IMR-90 (cell line): ENCODE measurements at regions of chr12 and their contacts with region 1.

Region 1: DNA sequence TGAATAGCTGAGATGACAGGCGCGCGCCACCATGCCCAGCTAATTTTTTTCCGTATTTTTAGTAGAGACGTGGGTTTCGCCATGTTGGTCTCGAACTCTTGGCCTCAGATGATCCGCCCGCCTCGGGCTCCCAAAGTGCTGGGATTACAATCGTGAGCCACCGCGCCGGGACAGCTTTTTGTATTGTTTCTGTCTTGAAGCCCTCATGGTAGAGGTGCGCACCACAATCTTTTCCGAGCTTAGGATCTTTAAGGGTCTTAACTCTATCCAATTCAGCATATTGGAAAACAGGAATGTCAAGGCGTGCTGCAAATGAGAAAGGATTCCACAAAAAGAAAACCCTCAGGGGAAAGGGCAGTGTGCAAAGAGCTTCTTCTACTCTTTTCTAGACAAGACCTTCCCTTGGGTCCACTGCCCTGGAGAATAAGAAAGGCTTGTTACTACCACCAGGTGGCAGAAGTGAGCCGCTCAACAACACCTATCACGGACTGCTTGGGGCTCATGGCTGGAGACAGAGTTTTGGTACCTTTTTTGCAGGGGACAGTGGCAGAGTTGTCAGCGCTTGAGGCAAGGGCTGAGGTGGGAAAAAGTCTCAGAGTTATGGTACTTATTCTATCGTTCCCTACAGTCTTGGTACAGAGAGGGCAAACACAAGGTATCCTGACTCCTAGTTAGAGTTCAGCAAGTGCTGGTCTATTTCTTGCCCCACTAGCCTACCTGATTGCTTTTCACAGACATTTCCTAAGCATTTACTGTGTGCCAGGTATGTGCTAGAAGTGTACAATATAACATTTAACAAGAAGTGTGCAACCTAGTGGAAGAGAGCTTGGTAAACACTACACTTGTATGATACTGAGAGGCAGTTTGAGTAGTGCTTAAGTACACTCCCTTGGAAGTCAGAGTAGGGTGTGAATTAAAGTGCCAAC is 16.4 kb upstream of the SP7 start:
- DNase-seq: peak; percentile 83
- ATAC-seq: peak; percentile 99
- H3K4me3 ChIP-seq: no peak overlapping the region
- H3K27ac ChIP-seq: no peak overlapping the region
- H3K4me1 ChIP-seq: no peaks in the 10 kb centered on the region
- H3K27me3 ChIP-seq: no peaks in the 10 kb centered on the region
- CTCF ChIP-seq: peak; percentile 96
- POLR2A ChIP-seq: no peak
- RAD21 ChIP-seq: peak; percentile 94

Region 2: GRCh38 chr12:53190108-53190729 is 162.4 kb before region 1 on chr12:
- CTCF ChIA-PET with region 1: no interaction called
- POLR2A ChIA-PET with region 1: no interaction called
- dilution Hi-C with region 1: no loop called
- in situ Hi-C with region 1: no loop called
- intact Hi-C with region 1: no loop called
- DNase-seq: peak; percentile 59
- ATAC-seq: peak; percentile 90
- H3K4me3 ChIP-seq: no peak overlapping the region
- H3K27ac ChIP-seq: no peak overlapping the region
- H3K4me1 ChIP-seq: no peaks in the 10 kb centered on the region; the same call in 1 of the 2 replicates
- H3K27me3 ChIP-seq: no peaks in the 10 kb centered on the region
- CTCF ChIP-seq: peak; percentile 70
- POLR2A ChIP-seq: no peak
- RAD21 ChIP-seq: peak; percentile 59

Region 3: DNA sequence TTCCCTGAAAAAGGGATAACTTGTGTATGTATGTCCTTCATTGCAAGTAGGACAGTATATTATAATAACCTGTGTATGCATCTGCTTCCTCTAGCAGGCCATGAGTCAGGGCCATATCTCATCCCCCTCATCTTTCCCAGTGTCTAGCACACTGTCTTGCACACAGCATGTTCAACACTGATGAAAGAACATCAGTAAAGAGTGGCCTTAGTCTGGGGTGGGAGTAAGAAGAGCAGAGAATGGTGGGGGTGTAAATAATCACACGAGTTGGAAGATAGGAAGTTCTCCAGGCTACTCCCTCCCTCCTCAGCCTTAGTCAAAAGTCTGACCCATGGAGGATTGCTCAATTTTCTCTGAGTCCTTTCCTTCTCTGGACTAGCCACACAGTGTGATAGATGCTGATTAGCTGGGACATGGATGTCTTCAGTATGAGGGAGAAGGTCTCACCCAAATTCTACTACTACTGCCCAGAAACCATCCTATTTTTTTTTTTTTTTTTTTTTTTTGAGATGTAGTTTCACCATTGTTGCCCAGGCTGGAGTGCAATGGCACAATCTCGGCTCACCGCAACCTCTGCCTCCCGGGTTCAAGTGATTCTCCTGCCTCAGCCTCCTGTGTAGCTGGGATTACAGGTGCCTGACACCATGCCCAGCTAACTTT is 12.8 kb after region 1 on chr12:
- CTCF ChIA-PET with region 1: interaction called, 10 read pairs
- POLR2A ChIA-PET with region 1: no interaction called
- dilution Hi-C with region 1: no loop called
- in situ Hi-C with region 1: no loop called
- intact Hi-C with region 1: no loop called
- DNase-seq: peak; percentile 49
- ATAC-seq: peak; percentile 53
- H3K4me3 ChIP-seq: no peak overlapping the region
- H3K27ac ChIP-seq: no peak overlapping the region
- H3K4me1 ChIP-seq: peaks cover 2% of the 10 kb centered on the region; the same call in 1 of the 2 replicates
- H3K27me3 ChIP-seq: no peaks in the 10 kb centered on the region
- CTCF ChIP-seq: no peak
- POLR2A ChIP-seq: no peak
- RAD21 ChIP-seq: no peak

Region 4: DNA sequence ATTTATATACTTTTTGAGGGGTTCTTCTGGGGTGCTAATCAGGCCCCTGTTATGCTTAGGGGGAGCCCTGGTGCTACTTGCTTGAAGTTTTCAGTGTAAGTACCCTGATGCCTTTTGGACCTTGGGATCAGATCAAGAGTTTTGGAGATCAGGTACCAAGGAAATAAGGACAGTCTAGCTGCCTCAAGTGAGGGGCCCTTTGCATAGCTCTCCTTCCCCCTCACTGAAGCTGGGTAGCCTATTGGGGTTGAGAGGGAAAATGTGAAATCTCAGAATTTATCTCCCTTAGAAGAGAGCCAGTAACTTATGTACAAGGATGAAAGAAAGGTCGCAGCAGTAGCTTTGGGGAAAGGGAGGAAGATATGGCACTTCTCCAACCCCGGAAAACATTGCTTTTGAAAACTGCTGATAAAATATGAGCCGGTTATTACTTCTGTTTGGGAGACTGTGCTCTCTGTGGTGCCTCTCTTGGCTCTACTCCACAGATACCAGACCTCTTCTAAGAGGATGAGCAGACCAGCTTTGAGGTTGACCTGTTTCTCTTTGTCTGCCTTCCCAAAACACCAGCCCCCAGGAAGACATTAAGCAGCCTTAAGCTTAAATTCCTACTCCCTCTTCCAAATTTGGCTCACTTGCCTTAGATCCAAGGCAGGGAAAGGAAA is 62.3 kb after region 1 on chr12:
- CTCF ChIA-PET with region 1: interaction called, 5 read pairs
- POLR2A ChIA-PET with region 1: no interaction called
- dilution Hi-C with region 1: no loop called
- in situ Hi-C with region 1: loop called (anchors 5 kb)
- intact Hi-C with region 1: no loop called
- DNase-seq: no peak
- ATAC-seq: peak; percentile 35
- H3K4me3 ChIP-seq: no peak overlapping the region
- H3K27ac ChIP-seq: no peak overlapping the region
- H3K4me1 ChIP-seq: peaks cover 8% of the 10 kb centered on the region; the same call in 1 of the 2 replicates
- H3K27me3 ChIP-seq: no peaks in the 10 kb centered on the region
- CTCF ChIP-seq: no peak
- POLR2A ChIP-seq: no peak
- RAD21 ChIP-seq: no peak

Region 5: GRCh38 chr12:53427905-53428594 is 75.5 kb after region 1 on chr12:
- CTCF ChIA-PET with region 1: interaction called, 40 read pairs
- POLR2A ChIA-PET with region 1: no interaction called
- dilution Hi-C with region 1: no loop called
- in situ Hi-C with region 1: no loop called
- intact Hi-C with region 1: no loop called
- DNase-seq: peak; percentile 97
- ATAC-seq: peak; percentile 88
- H3K4me3 ChIP-seq: no peak overlapping the region
- H3K27ac ChIP-seq: no peak overlapping the region
- H3K4me1 ChIP-seq: peaks cover 5% of the 10 kb centered on the region; the same call in 1 of the 2 replicates
- H3K27me3 ChIP-seq: peaks cover 10% of the 10 kb centered on the region; the same call in 1 of the 2 replicates
- CTCF ChIP-seq: no peak
- POLR2A ChIP-seq: no peak
- RAD21 ChIP-seq: no peak

Region 6: DNA sequence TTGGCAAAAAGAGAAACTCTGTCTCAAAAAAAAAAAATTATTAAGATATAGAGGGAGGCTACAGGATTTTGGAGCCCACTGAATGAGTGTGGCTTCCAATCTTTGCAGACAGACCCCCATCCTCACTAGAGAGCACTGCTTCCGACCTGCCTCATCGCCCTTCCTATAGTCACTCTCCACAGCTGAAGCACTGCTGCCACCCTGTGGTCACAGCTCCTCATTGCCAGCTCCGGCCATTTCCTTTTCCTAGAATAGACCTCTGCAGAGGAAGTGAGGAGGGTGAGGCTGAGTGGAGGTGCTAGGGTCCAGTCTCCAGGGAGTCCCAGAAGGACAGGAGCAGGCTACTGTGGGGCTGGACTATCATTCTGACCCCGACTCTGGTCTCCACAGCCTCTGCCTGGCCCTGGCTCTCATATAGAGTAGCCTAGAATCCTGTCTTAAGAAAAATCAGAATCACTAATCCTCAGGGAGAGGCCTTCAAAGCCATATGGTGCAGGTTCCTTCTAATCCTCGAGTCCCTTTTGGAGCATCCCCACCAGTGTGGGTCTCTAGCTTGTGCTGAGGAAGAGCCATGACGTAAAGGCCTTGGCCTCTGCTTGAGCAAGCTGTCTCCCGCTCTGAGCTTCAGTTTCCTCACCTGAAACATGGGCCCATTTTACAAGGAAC is 156.1 kb after region 1 on chr12:
- CTCF ChIA-PET with region 1: no interaction called
- POLR2A ChIA-PET with region 1: no interaction called
- dilution Hi-C with region 1: no loop called
- in situ Hi-C with region 1: no loop called
- intact Hi-C with region 1: loop called (anchors 2 kb)
- DNase-seq: peak; percentile 67
- ATAC-seq: peak; percentile 93
- H3K4me3 ChIP-seq: no peak overlapping the region
- H3K27ac ChIP-seq: no peak overlapping the region
- H3K4me1 ChIP-seq: no peaks in the 10 kb centered on the region
- H3K27me3 ChIP-seq: no peaks in the 10 kb centered on the region
- CTCF ChIP-seq: peak; percentile 94
- POLR2A ChIP-seq: peak; percentile 52; the same call in 1 of the 2 replicates
- RAD21 ChIP-seq: peak; percentile 95